ENCODE measurements at regions of chr13 and their contacts with region 1.

Region 1: GRCh38 chr13:33542283-33543088 is 256.9 kb upstream of the STARD13 start:
- DNase-seq: peak; percentile 100
- H3K4me3 ChIP-seq: peak overlapping the region; percentile 24 to 67 (median 37)
- H3K27ac ChIP-seq: peak overlapping the region; percentile 100
- H3K4me1 ChIP-seq: peaks cover 23% of the 10 kb centered on the region
- H3K27me3 ChIP-seq: no peaks in the 10 kb centered on the region
- CTCF ChIP-seq: peak; percentile 94 to 98
- POLR2A ChIP-seq: peak; percentile 64

Region 2: GRCh38 chr13:32315238-32316027 is 1227.1 kb before region 1 on chr13 and contains the starts of genes BRCA2 and ZAR1L:
- CTCF ChIA-PET with region 1: no interaction called
- POLR2A ChIA-PET with region 1: no interaction called
- dilution Hi-C with region 1: no loop called
- intact Hi-C with region 1: loop called (anchors 1 kb)
- DNase-seq: peak; percentile 86
- H3K4me3 ChIP-seq: peak within 1 kb of the TSS; percentile 37 to 96 (median 56)
- H3K27ac ChIP-seq: peak within 1 kb of the TSS; percentile 88
- H3K4me1 ChIP-seq: peaks cover 14% of the 10 kb centered on the region
- H3K27me3 ChIP-seq: no peaks in the 10 kb centered on the region
- CTCF ChIP-seq: no peak
- POLR2A ChIP-seq: peak; percentile 53
- total RNA-seq, gene BRCA2: 16.1 and 17.5 TPM in 2 replicates
- total RNA-seq, gene ZAR1L: not detected in 2 replicates

Region 3: GRCh38 chr13:33090755-33091414 is 451.6 kb before region 1 on chr13:
- CTCF ChIA-PET with region 1: no interaction called
- POLR2A ChIA-PET with region 1: no interaction called
- dilution Hi-C with region 1: no loop called
- intact Hi-C with region 1: loop called (anchors 1 kb)
- DNase-seq: peak; percentile 83
- H3K4me3 ChIP-seq: no peak overlapping the region
- H3K27ac ChIP-seq: peak overlapping the region; percentile 53
- H3K4me1 ChIP-seq: peaks cover 42% of the 10 kb centered on the region
- H3K27me3 ChIP-seq: no peaks in the 10 kb centered on the region
- CTCF ChIP-seq: no peak
- POLR2A ChIP-seq: no peak

Region 4: DNA sequence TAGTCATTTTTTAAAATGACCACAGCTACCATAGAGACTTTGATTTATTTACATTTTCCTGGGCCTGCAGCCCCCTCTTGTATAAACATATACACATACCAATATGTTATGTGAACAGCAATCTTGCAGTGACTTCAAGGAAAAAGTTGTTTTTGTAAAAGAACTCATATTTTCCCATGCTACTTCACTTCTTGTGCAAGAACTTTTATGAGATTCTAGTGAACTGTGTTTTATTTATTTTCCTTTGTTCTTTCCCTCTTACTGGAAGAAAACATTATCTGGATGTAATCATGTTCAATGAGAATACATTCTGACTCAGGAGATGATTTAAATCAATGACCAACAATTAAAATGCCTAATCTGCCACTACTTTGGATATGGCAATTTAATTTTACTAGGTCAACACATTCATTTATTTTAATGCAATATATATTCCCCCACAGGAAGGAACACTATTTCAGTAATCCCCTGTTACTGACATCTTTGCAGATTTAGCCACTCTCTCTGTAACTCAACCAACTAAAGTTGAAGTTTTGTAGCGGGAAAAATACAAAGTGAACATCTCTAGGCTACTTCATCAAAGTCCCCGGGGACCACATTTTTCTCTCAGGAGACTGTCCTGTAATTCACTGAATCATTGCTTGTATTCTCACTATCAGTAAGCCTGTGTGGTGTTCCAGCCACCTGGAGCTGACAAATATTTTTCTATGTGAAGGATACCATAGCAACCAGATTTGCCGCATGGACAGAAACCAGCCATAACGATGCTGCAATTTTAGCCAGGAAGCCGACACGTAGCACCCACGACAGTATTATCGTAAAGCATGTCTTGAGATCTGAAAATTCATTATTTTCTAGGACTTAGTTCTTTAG is 347.4 kb before region 1 on chr13:
- CTCF ChIA-PET with region 1: interaction called, 5 read pairs
- POLR2A ChIA-PET with region 1: no interaction called
- dilution Hi-C with region 1: no loop called
- intact Hi-C with region 1: loop called (anchors 1 kb)
- DNase-seq: peak; percentile 86
- H3K4me3 ChIP-seq: no peak overlapping the region
- H3K27ac ChIP-seq: peak overlapping the region; percentile 87
- H3K4me1 ChIP-seq: peaks cover 39% of the 10 kb centered on the region
- H3K27me3 ChIP-seq: no peaks in the 10 kb centered on the region
- CTCF ChIP-seq: no peak
- POLR2A ChIP-seq: no peak

Region 5: GRCh38 chr13:33285420-33286124 is 256.9 kb before region 1 on chr13 and contains the start of gene STARD13:
- CTCF ChIA-PET with region 1: interaction called, 16 read pairs
- POLR2A ChIA-PET with region 1: interaction called, 4 read pairs
- dilution Hi-C with region 1: no loop called
- intact Hi-C with region 1: loop called (anchors 1 kb)
- DNase-seq: peak; percentile 98
- H3K4me3 ChIP-seq: peak within 1 kb of the TSS; percentile 79 to 98 (median 88)
- H3K27ac ChIP-seq: peak within 1 kb of the TSS; percentile 99
- H3K4me1 ChIP-seq: peaks cover 30% of the 10 kb centered on the region
- H3K27me3 ChIP-seq: no peaks in the 10 kb centered on the region
- CTCF ChIP-seq: peak; percentile 29 to 49
- POLR2A ChIP-seq: peak; percentile 85
- total RNA-seq, gene STARD13: 41.1 and 47.7 TPM in 2 replicates

Region 6: GRCh38 chr13:33554919-33555791 is 12.7 kb after region 1 on chr13:
- CTCF ChIA-PET with region 1: interaction called, 8 read pairs
- POLR2A ChIA-PET with region 1: no interaction called
- dilution Hi-C with region 1: no loop called
- intact Hi-C with region 1: loop called (anchors 1 kb)
- DNase-seq: peak; percentile 31
- H3K4me3 ChIP-seq: peak overlapping the region in 1 of 3 experiments; percentile 32
- H3K27ac ChIP-seq: peak overlapping the region; percentile 67
- H3K4me1 ChIP-seq: peaks cover 25% of the 10 kb centered on the region
- H3K27me3 ChIP-seq: no peaks in the 10 kb centered on the region
- CTCF ChIP-seq: no peak
- POLR2A ChIP-seq: no peak

Region 7: DNA sequence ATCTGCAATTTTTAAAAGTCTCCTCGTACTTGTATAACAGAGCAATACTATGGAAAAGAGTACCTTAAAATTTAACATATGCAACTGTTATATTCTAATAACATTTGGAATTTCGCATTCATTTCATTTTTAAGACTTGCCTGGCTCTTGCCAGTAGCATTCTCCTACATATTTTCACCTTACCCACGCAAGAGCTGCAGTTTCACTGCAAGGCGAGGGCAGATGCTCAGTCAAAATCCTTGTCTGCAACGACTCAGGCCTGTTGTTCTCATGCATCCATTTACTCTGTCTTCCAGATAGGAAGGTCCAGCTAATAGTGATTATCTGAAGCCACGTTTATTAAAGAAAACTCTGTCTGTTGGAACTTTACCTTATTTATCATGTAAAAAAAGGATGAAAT is 48.5 kb after region 1 on chr13:
- CTCF ChIA-PET with region 1: no interaction called
- POLR2A ChIA-PET with region 1: no interaction called
- dilution Hi-C with region 1: no loop called
- intact Hi-C with region 1: no loop called
- DNase-seq: no peak
- H3K4me3 ChIP-seq: no peak overlapping the region
- H3K27ac ChIP-seq: no peak overlapping the region
- H3K4me1 ChIP-seq: no peaks in the 10 kb centered on the region
- H3K27me3 ChIP-seq: no peaks in the 10 kb centered on the region
- CTCF ChIP-seq: no peak
- POLR2A ChIP-seq: no peak

Measured in endothelial cell of umbilical vein (primary cell).